Gastrocnemius medialis (tissue), 4 donors: ENCODE measurements at regions of chr16 and their contacts with region 1.

Region 1: GRCh38 chr16:48609652-48610029 is 339 bp downstream of the N4BP1 start:
- DNase-seq: peak in 1 of 2 donors; percentile 59
- ATAC-seq: peak; percentile 64 to 66
- H3K4me3 ChIP-seq: peak overlapping the region; percentile 73 to 94 (median 82)
- H3K27ac ChIP-seq: peak overlapping the region; percentile 88 to 93 (median 92)
- H3K4me1 ChIP-seq: peaks cover 34 to 40% of the 10 kb centered on the region in 2 donors
- H3K27me3 ChIP-seq: no peaks in the 10 kb centered on the region
- CTCF ChIP-seq: no peak
- POLR2A ChIP-seq: no peak

Region 2: GRCh38 chr16:48365581-48366164 is 244.0 kb before region 1 on chr16:
- in situ Hi-C with region 1: no loop called
- intact Hi-C with region 1: loop called (anchors 1 kb)
- DNase-seq: peak; percentile 82 to 90
- ATAC-seq: peak; percentile 81 to 85
- H3K4me3 ChIP-seq: peak overlapping the region; percentile 62 to 74 (median 72)
- H3K27ac ChIP-seq: peak overlapping the region; percentile 91 to 95 (median 92)
- H3K4me1 ChIP-seq: peaks cover 51 to 55% of the 10 kb centered on the region in 2 donors
- H3K27me3 ChIP-seq: no peaks in the 10 kb centered on the region
- CTCF ChIP-seq: no peak
- POLR2A ChIP-seq: peak; percentile 84 to 96

Region 3: GRCh38 chr16:48385272-48386150 is 224.1 kb before region 1 on chr16 and contains the start of gene SIAH1:
- in situ Hi-C with region 1: no loop called
- intact Hi-C with region 1: loop called (anchors 1 kb)
- DNase-seq: peak; percentile 69 to 82
- ATAC-seq: peak; percentile 76 to 78
- H3K4me3 ChIP-seq: peak within 1 kb of the TSS; percentile 77 to 89 (median 79)
- H3K27ac ChIP-seq: peak within 1 kb of the TSS; percentile 94 to 99 (median 98)
- H3K4me1 ChIP-seq: peaks cover 28 to 36% of the 10 kb centered on the region in 2 donors
- H3K27me3 ChIP-seq: no peaks in the 10 kb centered on the region
- CTCF ChIP-seq: peak in 2 of 5 experiments; percentile 6 to 16
- POLR2A ChIP-seq: peak; percentile 96 to 97
- total RNA-seq, gene SIAH1: 19.9 to 21.0 (median 20.1) TPM

Region 4: DNA sequence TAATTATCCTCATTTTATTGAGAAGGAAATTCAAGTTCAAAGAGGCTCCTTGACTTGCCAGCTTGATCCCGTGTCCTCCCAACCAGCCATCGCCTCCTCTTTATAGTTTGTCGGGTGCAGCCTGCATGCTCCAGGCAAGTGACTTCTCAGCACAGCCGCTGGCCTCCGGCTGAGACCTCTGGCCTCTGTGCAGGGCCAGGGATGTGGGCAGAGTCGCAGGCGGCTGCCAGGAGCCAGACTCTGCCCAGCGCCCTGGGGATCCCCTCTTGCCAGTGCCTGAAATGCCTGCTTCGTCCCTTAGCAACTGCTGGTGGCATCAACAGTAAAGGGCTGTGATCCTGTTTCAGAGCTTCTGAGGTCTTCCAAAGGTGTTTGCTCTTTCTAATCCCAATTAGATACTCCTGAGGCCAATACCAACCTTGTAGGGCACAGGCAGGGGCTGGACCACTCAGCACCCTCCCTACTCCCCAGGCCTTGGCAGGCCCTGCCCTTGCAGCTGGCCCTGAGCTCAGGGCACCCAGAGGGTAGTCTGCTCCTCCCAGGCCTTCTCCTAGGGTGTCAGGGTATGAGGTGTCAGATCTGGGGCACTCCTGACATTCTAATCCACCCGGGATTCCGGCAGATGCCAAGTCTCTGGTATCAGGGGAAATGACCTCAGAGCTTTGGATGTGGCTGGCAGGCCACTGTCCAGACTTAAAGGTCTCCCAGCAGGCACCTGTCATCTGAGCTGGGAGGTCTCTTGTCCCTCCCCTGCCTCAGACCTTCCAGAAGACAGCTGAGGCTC is 156.5 kb before region 1 on chr16:
- in situ Hi-C with region 1: no loop called
- intact Hi-C with region 1: loop called (anchors 10 kb)
- DNase-seq: peak; percentile 16 to 86
- ATAC-seq: peak; percentile 55 to 92
- H3K4me3 ChIP-seq: no peak overlapping the region
- H3K27ac ChIP-seq: peak overlapping the region; percentile 14 to 70 (median 64)
- H3K4me1 ChIP-seq: peaks cover 10 to 17% of the 10 kb centered on the region in 2 donors
- H3K27me3 ChIP-seq: no peaks in the 10 kb centered on the region
- CTCF ChIP-seq: no peak
- POLR2A ChIP-seq: no peak

Region 5: DNA sequence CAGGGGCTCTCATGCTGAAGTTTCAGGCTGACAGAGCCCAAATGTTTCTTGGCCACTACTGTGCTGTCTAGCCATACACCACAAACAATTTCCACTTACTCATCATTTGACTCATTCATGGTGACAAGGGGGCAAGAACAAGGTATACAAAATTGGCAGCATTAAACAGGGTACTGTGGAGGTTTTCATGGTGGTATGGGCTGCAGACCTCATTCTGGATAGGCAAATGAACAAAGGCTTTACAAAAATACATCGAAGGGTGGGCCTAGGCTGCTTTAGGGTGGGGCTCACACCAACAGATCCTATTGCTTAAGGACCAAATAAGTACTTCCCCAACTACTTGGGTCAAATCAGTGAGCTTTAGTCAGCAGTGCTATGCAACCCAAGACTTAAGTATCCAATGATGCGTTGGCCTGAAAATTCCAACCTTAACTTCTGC is 52.7 kb before region 1 on chr16:
- in situ Hi-C with region 1: loop called in 1 of 4 experiments (anchors 10 kb)
- intact Hi-C with region 1: loop called (anchors 2 kb)
- DNase-seq: no peak
- ATAC-seq: no peak
- H3K4me3 ChIP-seq: no peak overlapping the region
- H3K27ac ChIP-seq: peak overlapping the region in 1 of 4 donors; percentile 7
- H3K4me1 ChIP-seq: peaks cover 75 to 79% of the 10 kb centered on the region in 2 donors
- H3K27me3 ChIP-seq: no peaks in the 10 kb centered on the region
- CTCF ChIP-seq: no peak
- POLR2A ChIP-seq: no peak

Region 6: GRCh38 chr16:48583075-48584065 is 26.3 kb before region 1 on chr16:
- in situ Hi-C with region 1: no loop called
- intact Hi-C with region 1: no loop called
- DNase-seq: no peak
- ATAC-seq: no peak
- H3K4me3 ChIP-seq: no peak overlapping the region
- H3K27ac ChIP-seq: no peak overlapping the region
- H3K4me1 ChIP-seq: peaks cover 10 to 14% of the 10 kb centered on the region in 2 donors
- H3K27me3 ChIP-seq: no peaks in the 10 kb centered on the region
- CTCF ChIP-seq: no peak
- POLR2A ChIP-seq: no peak